Vagina (tissue), 2 donors: ENCODE measurements at regions of chr16 and their contacts with region 1.

Region 1: DNA sequence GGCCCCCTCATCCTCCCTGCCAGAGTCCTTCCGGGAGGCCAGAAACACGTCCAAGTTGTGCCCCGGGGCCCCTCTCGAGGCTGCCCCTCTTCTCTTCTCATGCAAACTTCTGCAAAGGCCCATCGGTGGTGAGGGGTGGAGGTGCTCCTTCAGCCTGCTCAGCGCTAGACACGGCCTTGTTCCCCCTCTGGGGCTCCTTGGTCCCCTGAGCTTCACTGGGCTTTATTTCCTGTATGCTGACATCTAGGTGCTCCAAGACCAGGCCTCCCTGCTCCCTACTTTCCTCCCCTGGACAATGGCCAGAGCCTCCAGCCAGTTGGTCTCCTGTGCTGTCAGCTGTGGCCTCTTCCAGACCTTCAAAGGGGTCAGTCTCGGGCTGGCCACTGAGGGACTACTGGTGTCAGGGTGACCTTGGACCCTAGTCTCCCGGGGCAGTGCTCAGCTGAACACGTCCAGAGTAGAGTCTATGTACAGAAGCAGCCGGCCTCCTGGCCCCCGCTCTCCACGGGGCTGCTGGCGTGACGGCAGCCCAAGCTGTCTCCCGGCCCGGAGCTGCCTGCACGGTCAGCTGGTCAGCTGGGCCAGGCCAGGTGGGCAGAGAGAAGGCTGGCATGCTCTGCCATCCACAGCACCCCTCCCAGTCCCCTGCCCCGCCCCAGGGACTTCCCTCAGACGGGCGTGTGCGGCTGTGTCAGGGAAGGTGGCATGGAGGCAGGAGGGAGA is 1.7 kb upstream of the PRR35 start:
- DNase-seq: no peak
- H3K4me3 ChIP-seq: no peak overlapping the region
- H3K27ac ChIP-seq: no peak overlapping the region
- H3K4me1 ChIP-seq: peaks cover 20% of the 10 kb centered on the region
- H3K27me3 ChIP-seq: no peaks in the 10 kb centered on the region
- CTCF ChIP-seq: no peak
- POLR2A ChIP-seq: no peak

Region 2: GRCh38 chr16:1073566-1074378 is 515.3 kb after region 1 on chr16:
- intact Hi-C with region 1: loop called (anchors 2 kb)
- DNase-seq: no peak
- H3K4me3 ChIP-seq: no peak overlapping the region
- H3K27ac ChIP-seq: no peak overlapping the region
- H3K4me1 ChIP-seq: peaks cover 10% of the 10 kb centered on the region
- H3K27me3 ChIP-seq: no peaks in the 10 kb centered on the region
- CTCF ChIP-seq: no peak
- POLR2A ChIP-seq: no peak